ENCODE measurements at regions of chr3 and their contacts with region 1.

Region 1: DNA sequence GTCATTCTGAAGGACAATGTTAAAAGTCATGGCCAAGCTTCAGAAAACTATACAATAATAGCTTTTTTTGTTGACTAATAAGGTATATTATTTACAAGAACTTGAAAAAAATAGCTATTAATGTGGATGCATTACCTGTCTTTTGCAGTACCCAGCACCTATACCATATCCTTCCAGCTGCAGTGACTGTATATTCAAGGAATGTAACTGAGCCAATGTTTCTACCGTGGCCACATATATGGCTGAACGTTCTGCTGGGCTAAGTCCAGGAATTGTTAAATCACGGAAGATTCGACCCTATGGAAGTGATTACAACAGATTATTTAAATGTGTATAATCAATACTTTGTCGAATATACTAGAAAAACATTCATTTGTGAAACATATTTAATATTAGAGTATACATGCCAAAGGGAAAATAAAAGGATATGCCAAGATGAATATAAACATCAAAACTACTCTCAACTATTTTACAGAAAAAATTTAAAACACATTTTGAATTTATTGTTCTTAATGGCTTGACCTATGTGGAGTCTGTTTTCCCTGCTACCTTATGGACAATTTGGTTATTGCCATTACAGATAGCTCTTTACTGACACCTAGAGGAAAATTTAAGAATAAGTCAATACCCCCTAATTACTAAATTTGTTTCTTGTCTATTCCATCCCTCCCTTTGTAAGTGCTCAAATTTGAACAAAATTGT is 17.6 kb downstream of the ACAD11 start:
- DNase-seq: no peak
- ATAC-seq: peak; percentile 67; the same call in 1 of the 2 replicates
- H3K4me3 Mint-ChIP-seq: no peak overlapping the region
- H3K27ac Mint-ChIP-seq: no peak overlapping the region
- H3K4me1 Mint-ChIP-seq: no peaks in the 10 kb centered on the region
- H3K27me3 Mint-ChIP-seq: no peaks in the 10 kb centered on the region
- CTCF ChIP-seq: peak; percentile 52

Region 2: DNA sequence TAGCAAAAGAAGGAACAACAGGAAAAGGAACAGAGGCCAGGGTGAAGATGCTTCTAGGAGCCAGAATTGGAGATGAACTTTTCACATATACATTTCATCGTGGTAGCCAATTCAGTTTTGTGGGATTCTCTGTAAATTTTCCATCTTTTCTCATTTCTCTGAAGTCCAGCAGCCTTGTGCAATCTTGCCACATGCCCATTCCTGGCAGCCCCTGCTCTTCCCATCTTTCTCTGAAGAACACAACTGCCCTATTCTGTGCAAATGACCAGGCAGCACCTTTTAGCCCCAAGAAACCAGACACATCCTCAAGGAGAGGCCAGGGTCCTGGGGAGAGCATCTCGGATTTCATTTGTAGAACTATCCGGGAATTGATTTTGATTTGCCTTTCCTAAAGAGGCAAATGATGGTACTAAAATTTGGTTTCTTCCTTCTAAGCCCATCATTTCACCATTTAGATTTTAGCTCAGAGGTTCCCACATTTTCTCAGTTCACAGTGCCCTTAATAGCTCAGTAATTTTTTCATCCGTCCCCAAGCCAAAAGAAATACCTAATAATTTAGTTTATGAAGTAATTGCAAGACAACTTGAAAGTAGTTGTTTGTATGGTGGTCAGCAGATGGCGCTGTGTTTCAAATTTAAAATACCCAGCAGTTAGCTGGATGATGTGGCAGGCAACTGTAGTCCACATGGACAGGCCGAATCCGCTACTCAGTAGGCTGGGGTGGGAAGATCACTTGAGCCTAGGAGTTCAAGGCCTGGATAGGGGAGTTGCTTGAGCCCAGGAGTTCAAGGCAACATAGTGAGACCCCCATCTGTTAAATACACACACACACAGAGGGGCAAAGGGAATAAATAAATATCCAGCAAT is 106.2 kb before region 1 on chr3:
- CTCF ChIA-PET with region 1: interaction called, 35 read pairs
- POLR2A ChIA-PET with region 1: no interaction called
- DNase-seq: peak; percentile 63
- ATAC-seq: peak; percentile 94
- H3K4me3 Mint-ChIP-seq: no peak overlapping the region
- H3K27ac Mint-ChIP-seq: peak overlapping the region; percentile 67
- H3K4me1 Mint-ChIP-seq: peaks cover 9% of the 10 kb centered on the region
- H3K27me3 Mint-ChIP-seq: no peaks in the 10 kb centered on the region
- CTCF ChIP-seq: peak; percentile 73

Region 3: DNA sequence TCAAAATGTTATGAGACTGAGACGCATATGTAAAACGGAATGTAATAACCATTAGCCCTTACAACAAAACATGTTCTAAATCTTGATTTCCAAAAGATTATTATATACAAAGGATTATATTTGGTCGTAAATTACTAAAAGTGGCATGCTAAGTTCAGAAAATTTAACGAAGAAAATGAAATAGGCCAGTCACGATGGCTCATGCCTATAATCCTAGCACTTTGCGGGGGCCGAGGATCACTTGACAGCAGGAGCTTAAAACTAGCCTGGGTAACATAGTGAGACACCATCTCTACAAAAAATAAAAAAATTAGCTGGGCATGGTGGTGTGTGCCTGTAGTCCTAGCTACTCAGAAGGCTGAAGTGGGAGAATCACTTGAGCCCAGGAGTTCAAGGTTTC is 11.4 kb before region 1 on chr3:
- CTCF ChIA-PET with region 1: interaction called, 19 read pairs
- POLR2A ChIA-PET with region 1: no interaction called
- DNase-seq: no peak
- ATAC-seq: no peak
- H3K4me3 Mint-ChIP-seq: no peak overlapping the region
- H3K27ac Mint-ChIP-seq: no peak overlapping the region
- H3K4me1 Mint-ChIP-seq: peaks cover 18% of the 10 kb centered on the region
- H3K27me3 Mint-ChIP-seq: no peaks in the 10 kb centered on the region
- CTCF ChIP-seq: no peak

Region 4: DNA sequence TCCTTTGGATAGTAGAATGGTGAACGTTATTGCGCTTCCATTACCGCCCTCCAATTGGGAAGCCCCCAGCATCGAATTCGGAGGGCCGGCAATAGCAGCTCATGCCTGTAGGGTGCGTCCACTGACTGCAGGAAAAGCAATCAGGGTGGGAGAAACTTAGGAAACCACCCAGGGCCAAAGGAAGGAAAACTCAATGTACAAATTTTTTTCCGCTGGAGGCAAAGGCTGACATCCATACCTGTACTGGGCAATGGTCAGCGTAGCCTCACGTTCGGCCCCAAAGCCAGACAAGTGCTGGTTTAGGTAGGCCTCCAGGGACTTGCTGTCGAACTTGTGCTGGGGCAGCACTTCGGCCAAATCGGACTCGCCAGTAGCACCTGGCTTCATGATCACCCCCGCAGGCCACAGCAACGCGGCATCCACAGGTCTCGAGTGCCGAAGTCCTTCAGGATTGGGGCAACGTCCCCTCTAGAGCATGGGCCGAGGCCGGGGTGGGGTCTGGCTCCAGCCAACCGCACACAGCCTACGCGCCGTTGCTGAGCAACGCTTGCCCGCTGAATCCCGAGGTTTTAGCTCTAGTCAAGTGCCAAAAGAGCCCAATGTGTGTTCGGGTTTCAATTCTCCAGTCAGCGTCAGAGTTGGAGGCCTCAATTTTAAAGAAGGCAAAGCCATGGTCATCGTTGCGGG is 17.5 kb after region 1 on chr3 and contains the start of gene ACAD11:
- CTCF ChIA-PET with region 1: interaction called, 17 read pairs
- POLR2A ChIA-PET with region 1: no interaction called
- DNase-seq: peak; percentile 61
- ATAC-seq: peak; percentile 81
- H3K4me3 Mint-ChIP-seq: peak within 1 kb of the TSS; percentile 86
- H3K27ac Mint-ChIP-seq: peak within 1 kb of the TSS; percentile 89
- H3K4me1 Mint-ChIP-seq: peaks cover 18% of the 10 kb centered on the region
- H3K27me3 Mint-ChIP-seq: no peaks in the 10 kb centered on the region
- CTCF ChIP-seq: no peak
- total RNA-seq, gene ACAD11: 20.3 to 28.9 TPM (median 28.8 TPM) in 3 replicates

Region 5: DNA sequence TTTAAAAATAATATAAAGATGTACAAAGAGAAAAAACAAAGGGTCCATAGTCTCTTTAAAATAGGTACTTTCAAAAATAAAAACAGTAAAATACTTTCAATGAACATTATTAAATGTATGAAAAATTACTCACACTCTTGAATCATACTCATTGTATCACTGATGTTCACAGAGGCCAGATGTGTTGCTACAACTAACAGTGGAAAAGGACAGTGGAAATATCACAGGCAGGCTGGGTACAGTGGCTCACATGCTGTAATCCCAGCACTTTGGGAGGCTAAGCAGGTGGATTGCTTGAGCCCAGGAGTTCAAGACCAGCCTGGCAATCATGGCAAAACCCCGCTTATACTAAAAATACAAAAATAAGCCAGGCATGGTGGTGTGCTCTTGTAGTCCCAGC is 53.4 kb after region 1 on chr3:
- CTCF ChIA-PET with region 1: no interaction called
- POLR2A ChIA-PET with region 1: no interaction called
- DNase-seq: no peak
- ATAC-seq: no peak
- H3K4me3 Mint-ChIP-seq: no peak overlapping the region
- H3K27ac Mint-ChIP-seq: no peak overlapping the region
- H3K4me1 Mint-ChIP-seq: no peaks in the 10 kb centered on the region
- H3K27me3 Mint-ChIP-seq: no peaks in the 10 kb centered on the region
- CTCF ChIP-seq: no peak